Tibial artery (tissue), 4 donors: ENCODE measurements at regions of chr7 and their contacts with region 1.

Region 1: GRCh38 chr7:151304856-151305255 is 36.8 kb upstream of the NUB1 start:
- DNase-seq: no peak
- H3K4me3 ChIP-seq: no peak overlapping the region
- H3K27ac ChIP-seq: no peak overlapping the region
- H3K4me1 ChIP-seq: peaks cover 0 to 10% (median 6%) of the 10 kb centered on the region in 4 donors
- H3K27me3 ChIP-seq: peaks cover 0 to 66% of the 10 kb centered on the region in 2 donors
- CTCF ChIP-seq: no peak

Region 2: DNA sequence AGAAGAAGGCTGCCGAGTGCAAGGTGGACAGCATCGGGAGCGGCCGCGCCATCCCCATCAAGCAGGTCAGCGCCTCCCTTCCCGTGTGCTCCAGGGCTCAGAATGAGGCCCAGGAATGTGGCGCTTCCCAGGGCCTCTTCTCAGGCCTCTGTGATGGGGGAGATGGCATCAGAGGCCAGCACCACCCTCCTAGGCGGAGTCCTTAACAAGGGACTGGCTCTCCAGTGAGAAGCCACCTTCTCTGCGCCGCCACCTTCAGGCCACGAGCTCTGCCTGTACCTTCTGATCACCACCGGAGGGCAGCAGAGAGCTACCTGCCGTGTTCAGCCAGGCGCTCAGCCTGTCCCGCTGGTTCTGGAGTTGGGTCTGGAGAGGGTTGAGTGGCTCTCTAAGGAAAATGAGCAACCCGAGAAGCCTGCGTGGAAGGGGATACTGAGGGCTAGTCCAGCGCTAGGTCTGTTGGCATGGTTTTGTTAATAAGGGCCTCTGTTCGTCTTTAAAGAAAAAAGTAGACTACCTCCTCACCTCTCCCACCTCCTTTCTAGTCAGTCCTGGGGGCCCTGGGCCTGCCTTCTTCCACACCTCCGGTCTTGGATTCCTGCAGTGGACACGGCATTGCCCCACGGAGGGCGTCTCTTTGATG is 180.9 kb before region 1 on chr7:
- intact Hi-C with region 1: loop called (anchors 5 kb)
- DNase-seq: peak; percentile 61 to 89
- H3K4me3 ChIP-seq: no peak overlapping the region
- H3K27ac ChIP-seq: no peak overlapping the region
- H3K4me1 ChIP-seq: peaks cover 0 to 22% (median 11%) of the 10 kb centered on the region in 4 donors
- H3K27me3 ChIP-seq: no peaks in the 10 kb centered on the region
- CTCF ChIP-seq: peak; percentile 92 to 99

Region 3: GRCh38 chr7:151245360-151246101 is 59.3 kb before region 1 on chr7:
- intact Hi-C with region 1: loop called (anchors 5 kb)
- DNase-seq: no peak
- H3K4me3 ChIP-seq: peak overlapping the region; percentile 71 to 73
- H3K27ac ChIP-seq: peak overlapping the region; percentile 95 to 98
- H3K4me1 ChIP-seq: peaks cover 5 to 64% (median 56%) of the 10 kb centered on the region in 4 donors
- H3K27me3 ChIP-seq: no peaks in the 10 kb centered on the region
- CTCF ChIP-seq: peak; percentile 43 to 72

Region 4: DNA sequence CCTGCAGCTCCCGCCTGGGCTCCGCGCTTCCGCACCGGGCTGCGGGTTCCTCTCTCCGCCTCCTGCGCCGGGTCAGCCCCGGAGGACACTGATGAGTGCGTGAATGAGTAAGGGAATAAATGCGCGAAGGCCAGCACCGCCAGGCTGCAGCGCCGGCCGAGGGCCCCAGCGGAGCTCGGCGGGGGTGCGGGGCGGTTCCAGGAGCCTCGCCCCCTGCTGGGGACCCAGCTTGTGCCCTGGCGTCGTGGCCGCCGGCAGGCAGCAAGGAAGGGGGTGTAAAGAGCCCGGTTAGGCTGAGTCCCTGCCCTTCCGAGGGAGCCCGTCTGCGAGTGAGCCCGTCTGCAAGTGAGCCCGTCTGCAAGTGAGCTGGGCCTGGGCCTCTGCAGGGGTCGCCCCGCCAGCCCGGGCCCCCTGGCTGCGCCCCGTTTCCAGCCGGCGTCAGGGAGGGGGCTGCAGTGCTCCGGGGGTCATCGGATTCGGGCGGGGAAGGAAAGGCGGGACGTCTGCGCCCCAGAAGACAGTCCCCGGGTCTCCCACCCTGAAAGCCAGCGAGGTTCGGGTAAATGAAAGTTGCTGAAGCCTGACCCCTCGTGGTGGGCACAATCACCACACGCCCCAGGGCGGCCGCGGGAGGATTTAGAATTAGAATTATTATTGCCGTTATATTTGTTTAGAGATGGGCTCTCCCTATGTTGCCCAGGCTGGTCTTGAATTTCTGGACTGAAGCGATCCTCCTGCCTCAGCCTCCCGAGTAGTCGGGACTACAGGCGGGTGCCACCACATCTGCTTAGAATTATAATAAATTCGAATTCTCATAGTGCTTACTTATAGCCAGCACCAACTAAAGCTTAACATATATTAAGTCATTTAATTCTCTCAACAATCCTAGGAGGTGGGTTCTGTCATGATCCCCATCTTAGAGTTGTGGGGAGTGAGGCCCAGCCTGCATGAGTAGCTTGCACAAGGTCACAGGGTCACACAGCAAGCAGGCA is 143.7 kb after region 1 on chr7:
- intact Hi-C with region 1: loop called (anchors 5 kb)
- DNase-seq: peak; percentile 68 to 83
- H3K4me3 ChIP-seq: peak overlapping the region; percentile 56 to 63
- H3K27ac ChIP-seq: peak overlapping the region; percentile 47 to 71
- H3K4me1 ChIP-seq: peaks cover 0 to 9% (median 4%) of the 10 kb centered on the region in 4 donors
- H3K27me3 ChIP-seq: no peaks in the 10 kb centered on the region
- CTCF ChIP-seq: peak; percentile 78 to 80